ENCODE measurements at regions of chr13 and their contacts with region 1.

Region 1: DNA sequence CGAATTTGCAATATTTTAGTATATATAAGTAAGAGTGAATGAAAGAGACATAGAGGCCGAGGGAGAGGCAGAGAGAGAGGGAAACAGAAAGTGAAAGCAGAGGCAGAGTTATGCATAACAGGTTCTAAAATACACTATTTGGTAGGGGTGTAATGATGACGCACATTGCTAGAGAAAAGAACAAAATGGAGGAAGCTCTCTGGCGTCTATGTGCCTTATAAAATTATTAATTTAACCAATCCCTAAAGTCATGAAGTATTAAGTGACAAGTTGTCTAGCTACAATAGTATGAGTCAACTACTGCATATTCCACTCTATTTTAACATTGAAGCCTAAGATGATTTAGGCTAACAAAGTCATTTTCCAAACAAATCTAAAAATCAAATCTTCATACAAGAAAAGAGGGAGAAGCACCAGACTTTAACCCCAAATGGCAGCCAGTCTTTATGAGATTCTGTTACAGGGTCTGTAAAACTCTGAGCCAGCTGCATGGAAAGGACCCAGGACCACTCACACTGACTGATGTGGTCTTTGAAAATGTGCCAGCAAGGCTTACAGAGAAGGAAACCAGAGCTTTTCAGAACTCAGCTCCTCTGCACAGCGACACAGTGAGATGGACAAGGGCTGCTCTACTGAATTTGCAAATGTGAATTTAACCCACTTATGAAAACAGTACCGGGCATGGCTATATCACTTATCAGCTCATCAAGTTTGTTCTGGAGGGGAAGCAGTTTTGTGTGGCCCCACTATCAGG is 99.0 kb upstream of the SERP2 start:
- DNase-seq: peak; percentile 21
- ATAC-seq: peak; percentile 97
- H3K4me3 Mint-ChIP-seq: peak overlapping the region; percentile 55
- H3K27ac Mint-ChIP-seq: peak overlapping the region; percentile 91
- H3K4me1 Mint-ChIP-seq: peaks cover 59% of the 10 kb centered on the region
- H3K27me3 Mint-ChIP-seq: no peaks in the 10 kb centered on the region

Region 2: DNA sequence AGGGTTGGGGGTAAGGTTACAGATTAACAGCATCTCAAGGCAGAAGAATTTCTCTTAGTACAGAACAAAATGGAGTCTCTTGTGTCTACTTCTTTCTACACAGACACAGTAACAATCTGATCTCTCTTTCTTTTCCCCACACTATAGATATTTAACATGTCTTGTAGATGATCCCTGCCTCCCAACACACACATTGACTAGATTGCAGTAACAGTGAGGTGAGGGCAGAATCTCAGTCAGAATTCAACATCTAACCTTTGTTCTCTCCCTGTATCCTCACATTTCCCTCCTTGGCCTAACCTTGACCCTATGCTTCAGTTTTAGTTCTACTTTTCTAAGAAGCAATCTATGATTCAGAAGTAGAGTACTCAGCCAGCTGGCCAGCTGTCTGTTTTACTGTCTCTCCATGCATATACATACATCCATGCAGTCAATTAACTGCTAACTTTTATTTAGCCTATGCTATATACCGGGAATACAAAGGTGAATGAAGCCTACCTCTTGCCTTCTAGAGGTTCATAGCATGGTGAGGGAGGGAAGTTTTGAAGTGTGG is 1233.2 kb before region 1 on chr13:
- CTCF ChIA-PET with region 1: no interaction called
- POLR2A ChIA-PET with region 1: no interaction called
- intact Hi-C with region 1: loop called in 1 of 2 experiments (anchors 10 kb)
- DNase-seq: no peak
- ATAC-seq: no peak
- H3K4me3 Mint-ChIP-seq: no peak overlapping the region
- H3K27ac Mint-ChIP-seq: peak overlapping the region; percentile 17
- H3K4me1 Mint-ChIP-seq: peaks cover 72% of the 10 kb centered on the region
- H3K27me3 Mint-ChIP-seq: no peaks in the 10 kb centered on the region

Region 3: GRCh38 chr13:44141725-44142539 is 132.7 kb before region 1 on chr13:
- CTCF ChIA-PET with region 1: no interaction called
- POLR2A ChIA-PET with region 1: interaction called, 3 read pairs
- intact Hi-C with region 1: loop called in 1 of 2 experiments (anchors 5 kb)
- DNase-seq: peak; percentile 96
- ATAC-seq: peak; percentile 100
- H3K4me3 Mint-ChIP-seq: peak overlapping the region; percentile 87
- H3K27ac Mint-ChIP-seq: peak overlapping the region; percentile 90
- H3K4me1 Mint-ChIP-seq: peaks cover 15% of the 10 kb centered on the region
- H3K27me3 Mint-ChIP-seq: peaks cover 4% of the 10 kb centered on the region

Region 4: GRCh38 chr13:44293908-44294735 is 19.5 kb after region 1 on chr13:
- CTCF ChIA-PET with region 1: interaction called, 3 read pairs
- POLR2A ChIA-PET with region 1: no interaction called
- intact Hi-C with region 1: loop called (anchors 2 kb)
- DNase-seq: no peak
- ATAC-seq: peak; percentile 94
- H3K4me3 Mint-ChIP-seq: no peak overlapping the region
- H3K27ac Mint-ChIP-seq: peak overlapping the region; percentile 49
- H3K4me1 Mint-ChIP-seq: peaks cover 27% of the 10 kb centered on the region
- H3K27me3 Mint-ChIP-seq: peaks cover 21% of the 10 kb centered on the region

Region 5: DNA sequence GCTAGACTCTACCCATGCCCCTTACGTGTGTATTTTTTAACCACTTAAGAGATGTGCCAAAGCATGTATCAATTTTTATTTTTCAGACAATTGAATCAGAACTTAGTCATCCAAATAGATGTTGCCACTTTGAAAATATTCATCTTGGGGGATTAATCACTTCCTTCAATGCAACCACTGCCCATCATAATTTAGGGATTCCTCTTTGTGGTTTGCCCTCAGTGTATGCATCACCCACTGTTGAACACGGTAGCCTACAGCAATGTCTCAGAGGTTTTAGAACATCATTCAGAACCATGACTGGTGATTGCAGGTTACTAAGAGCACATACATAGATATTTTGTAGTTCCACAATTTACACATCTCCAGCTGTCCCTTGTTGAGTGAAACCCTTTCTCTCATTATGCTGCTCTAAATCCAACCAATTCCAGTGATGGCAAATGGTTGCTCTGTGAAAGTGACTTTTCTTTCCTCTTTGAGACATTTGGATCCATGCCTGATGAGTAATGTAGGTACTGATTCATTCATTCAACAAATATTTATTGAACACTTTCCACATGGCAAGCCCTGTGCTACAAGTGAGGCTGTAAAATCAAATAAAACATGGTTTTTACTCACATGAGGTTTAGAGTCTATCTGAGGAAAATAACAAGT is 38.4 kb after region 1 on chr13:
- CTCF ChIA-PET with region 1: no interaction called
- POLR2A ChIA-PET with region 1: no interaction called
- intact Hi-C with region 1: loop called in 1 of 2 experiments (anchors 2 kb)
- DNase-seq: peak; percentile 47
- ATAC-seq: peak; percentile 95
- H3K4me3 Mint-ChIP-seq: no peak overlapping the region
- H3K27ac Mint-ChIP-seq: peak overlapping the region; percentile 81
- H3K4me1 Mint-ChIP-seq: peaks cover 18% of the 10 kb centered on the region
- H3K27me3 Mint-ChIP-seq: peaks cover 28% of the 10 kb centered on the region

Measured in activated CD4-positive, alpha-beta T cell treated with anti-CD3 and anti-CD28 coated beads for 36 hours (primary cell).